HCT116 (cell line): ENCODE measurements at regions of chr1 and their contacts with region 1.

Region 1: GRCh38 chr1:23098463-23099170 is 70.0 kb downstream of the LUZP1 start:
- DNase-seq: peak; percentile 65
- ATAC-seq: peak; percentile 69
- H3K4me3 ChIP-seq: no peak overlapping the region
- H3K27ac ChIP-seq: no peak overlapping the region
- H3K4me1 ChIP-seq: peaks cover 32 to 54% of the 10 kb centered on the region in 2 experiments
- H3K27me3 ChIP-seq: no peaks in the 10 kb centered on the region
- CTCF ChIP-seq: peak; percentile 86 to 93 (median 93)
- POLR2A ChIP-seq: no peak
- RAD21 ChIP-seq: peak; percentile 97

Region 2: GRCh38 chr1:22451702-22452474 is 646.7 kb before region 1 on chr1 and contains the start of gene ZBTB40:
- CTCF ChIA-PET with region 1: no interaction called
- POLR2A ChIA-PET with region 1: no interaction called
- RAD21 ChIA-PET with region 1: no interaction called
- intact Hi-C with region 1: no loop called
- DNase-seq: peak; percentile 88
- ATAC-seq: peak; percentile 95
- H3K4me3 ChIP-seq: peak within 1 kb of the TSS; percentile 79 to 85
- H3K27ac ChIP-seq: peak within 1 kb of the TSS; percentile 67
- H3K4me1 ChIP-seq: peaks cover 13 to 25% of the 10 kb centered on the region in 2 experiments
- H3K27me3 ChIP-seq: no peaks in the 10 kb centered on the region
- CTCF ChIP-seq: no peak
- POLR2A ChIP-seq: peak; percentile 39
- RAD21 ChIP-seq: no peak
- total RNA-seq, gene ZBTB40: 19.5 TPM

Region 3: GRCh38 chr1:22976461-22977243 is 122.0 kb before region 1 on chr1:
- CTCF ChIA-PET with region 1: interaction called, 4 read pairs
- POLR2A ChIA-PET with region 1: no interaction called
- RAD21 ChIA-PET with region 1: no interaction called
- intact Hi-C with region 1: loop called (anchors 1 kb)
- DNase-seq: peak; percentile 78
- ATAC-seq: peak; percentile 98
- H3K4me3 ChIP-seq: 0 out of 4 replicates have a peak overlapping the region, but pooled peaks of 1 of the 2 experiments have one; percentile 2
- H3K27ac ChIP-seq: no peak overlapping the region
- H3K4me1 ChIP-seq: peaks cover 4 to 22% of the 10 kb centered on the region in 2 experiments; a peak in 2 of 4 replicates
- H3K27me3 ChIP-seq: no peaks in the 10 kb centered on the region
- CTCF ChIP-seq: peak; percentile 90 to 98 (median 95)
- POLR2A ChIP-seq: no peak
- RAD21 ChIP-seq: peak; percentile 96

Region 4: DNA sequence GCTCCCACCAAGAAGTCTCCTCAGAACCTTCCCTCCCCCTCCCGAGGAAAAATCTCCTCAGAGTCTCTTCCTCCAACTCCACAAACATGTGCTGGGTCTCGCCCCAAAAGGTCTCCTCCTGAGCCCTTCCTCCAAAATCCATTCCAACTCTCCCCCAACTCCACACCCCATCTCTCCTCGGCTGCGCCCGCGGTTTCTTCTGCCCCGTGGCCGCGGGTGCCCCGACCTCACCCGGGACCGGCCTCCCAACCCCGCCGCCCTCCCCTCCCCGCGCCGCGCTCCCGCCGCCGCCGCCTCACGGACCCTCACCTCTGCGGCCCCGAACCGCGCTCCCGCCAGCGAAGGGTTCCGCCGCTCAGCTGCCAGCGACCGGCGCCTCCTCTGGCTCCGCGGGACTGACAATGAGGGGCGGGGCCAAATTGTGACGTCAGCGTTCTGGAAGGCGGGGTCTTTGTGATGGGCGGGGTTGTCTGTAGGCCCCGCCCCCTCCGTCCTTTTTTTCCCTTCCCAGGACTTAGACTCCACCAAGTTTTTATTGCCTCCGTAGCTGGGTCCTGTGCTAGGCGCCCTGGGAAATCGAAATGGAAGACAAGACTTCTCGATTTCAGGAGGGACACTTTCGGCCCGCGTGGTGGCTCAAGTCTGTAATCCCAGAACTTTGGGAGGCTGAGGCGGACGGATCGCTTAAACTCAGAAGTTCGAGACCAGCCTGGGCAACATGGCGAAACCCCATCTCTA is 70.0 kb after region 1 on chr1 and contains the start of gene LUZP1:
- CTCF ChIA-PET with region 1: interaction called, 9 read pairs
- POLR2A ChIA-PET with region 1: interaction called, 19 read pairs
- RAD21 ChIA-PET with region 1: interaction called in 1 of 2 experiments, 3 read pairs
- intact Hi-C with region 1: loop called (anchors 5 kb)
- DNase-seq: peak; percentile 70
- ATAC-seq: peak; percentile 72
- H3K4me3 ChIP-seq: peak within 1 kb of the TSS; percentile 86 to 89
- H3K27ac ChIP-seq: peak within 1 kb of the TSS; percentile 75
- H3K4me1 ChIP-seq: peaks cover 8 to 26% of the 10 kb centered on the region in 2 experiments
- H3K27me3 ChIP-seq: no peaks in the 10 kb centered on the region
- CTCF ChIP-seq: no peak
- POLR2A ChIP-seq: peak; percentile 76
- RAD21 ChIP-seq: no peak
- total RNA-seq, gene LUZP1: 22.4 TPM

Region 5: DNA sequence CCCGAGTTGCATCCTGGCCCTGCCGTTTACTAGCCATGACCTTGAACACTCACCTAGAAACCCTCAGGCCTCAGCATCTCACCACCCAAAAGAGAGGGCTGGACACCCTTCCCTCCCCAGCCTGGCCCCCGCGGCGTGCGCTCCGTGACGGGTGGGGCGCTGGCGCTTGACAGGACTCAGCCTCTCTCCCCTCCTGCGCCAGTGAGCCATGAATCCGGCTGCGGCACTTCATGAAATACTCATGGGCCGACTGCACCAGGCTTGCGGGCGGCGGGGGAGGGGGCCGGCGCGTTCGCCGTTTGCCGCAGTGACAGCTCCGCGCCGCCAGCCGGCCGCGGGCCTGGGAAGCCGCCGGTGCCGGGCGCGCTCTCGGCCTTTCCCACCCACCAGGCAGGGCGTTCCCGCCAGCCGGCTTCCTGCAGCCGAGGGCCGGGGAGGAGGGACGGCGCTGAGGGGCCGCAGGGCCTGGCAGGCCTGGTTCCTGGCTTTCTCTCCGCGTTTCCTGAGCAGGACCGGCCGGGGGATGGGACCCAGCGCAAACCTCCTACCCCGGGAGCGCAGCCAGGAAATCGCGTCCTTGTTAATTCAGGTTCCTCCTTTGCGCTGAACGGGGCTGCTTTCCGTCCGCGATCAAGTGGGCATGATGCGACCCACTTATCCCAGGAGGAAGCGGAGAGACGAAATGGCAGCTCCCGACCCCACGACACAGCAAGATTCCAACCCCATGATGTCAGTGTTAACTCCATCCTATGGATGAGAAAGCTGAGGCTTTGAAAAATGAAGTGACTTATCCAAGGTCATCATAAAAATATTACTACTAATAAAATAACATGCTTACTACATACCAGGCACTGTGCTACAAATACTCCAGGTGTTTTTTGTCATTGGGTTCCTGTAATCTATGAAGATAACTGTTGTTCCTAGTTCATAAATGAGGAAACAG is 79.1 kb after region 1 on chr1:
- CTCF ChIA-PET with region 1: interaction called, 158 read pairs
- POLR2A ChIA-PET with region 1: interaction called, 3 read pairs
- RAD21 ChIA-PET with region 1: interaction called, 3 to 5 read pairs
- intact Hi-C with region 1: no loop called
- DNase-seq: no peak
- ATAC-seq: peak; percentile 81
- H3K4me3 ChIP-seq: peak overlapping the region; percentile 49 to 63
- H3K27ac ChIP-seq: no peak overlapping the region
- H3K4me1 ChIP-seq: peaks cover 2 to 29% of the 10 kb centered on the region in 2 experiments; a peak in 3 of 4 replicates
- H3K27me3 ChIP-seq: no peaks in the 10 kb centered on the region
- CTCF ChIP-seq: peak in 1 of 3 experiments; percentile 18; a peak in 1 of 6 replicates
- POLR2A ChIP-seq: no peak
- RAD21 ChIP-seq: no peak

Region 6: DNA sequence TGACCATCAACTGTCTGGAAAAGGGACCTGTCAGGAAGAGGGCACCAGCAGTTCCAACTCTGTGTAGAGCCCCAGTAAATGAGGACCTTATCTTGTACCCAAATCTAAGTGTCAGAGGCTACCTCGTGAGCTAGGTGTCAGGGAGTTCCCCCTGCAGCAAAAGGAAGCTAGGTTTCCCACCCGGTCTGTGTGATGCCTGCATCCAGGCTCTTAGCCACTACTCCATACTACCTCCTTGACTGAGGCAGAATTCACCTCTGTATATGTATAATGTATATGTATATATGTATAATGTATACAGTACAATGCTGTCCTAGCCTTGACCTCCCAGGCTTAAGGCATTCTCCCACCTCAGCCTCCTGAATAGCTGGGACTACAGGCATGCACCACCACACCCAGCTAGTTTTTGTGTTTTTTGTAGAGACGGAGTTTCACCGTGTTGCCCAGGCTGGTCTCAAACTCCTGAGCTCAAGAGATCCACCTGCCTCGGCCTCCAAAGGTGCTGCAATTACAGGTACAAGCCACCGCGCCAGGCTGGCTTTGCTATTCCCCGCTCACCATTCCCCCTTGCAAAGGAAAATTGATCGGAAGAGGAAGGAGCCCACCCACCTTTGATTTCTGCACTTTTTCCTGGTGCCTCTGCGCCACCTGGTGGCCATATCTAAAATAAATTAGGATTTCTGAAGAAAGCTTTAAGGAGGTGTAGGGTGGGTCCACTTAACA is 85.8 kb after region 1 on chr1:
- CTCF ChIA-PET with region 1: interaction called, 158 read pairs
- POLR2A ChIA-PET with region 1: interaction called, 9 read pairs
- RAD21 ChIA-PET with region 1: interaction called, 18 to 26 read pairs
- intact Hi-C with region 1: loop called (anchors 1 kb)
- DNase-seq: no peak
- ATAC-seq: peak; percentile 59
- H3K4me3 ChIP-seq: no peak overlapping the region
- H3K27ac ChIP-seq: no peak overlapping the region
- H3K4me1 ChIP-seq: peaks cover 17 to 26% of the 10 kb centered on the region in 2 experiments
- H3K27me3 ChIP-seq: no peaks in the 10 kb centered on the region
- CTCF ChIP-seq: peak; percentile 59 to 95 (median 76)
- POLR2A ChIP-seq: no peak
- RAD21 ChIP-seq: peak; percentile 96

Region 7: DNA sequence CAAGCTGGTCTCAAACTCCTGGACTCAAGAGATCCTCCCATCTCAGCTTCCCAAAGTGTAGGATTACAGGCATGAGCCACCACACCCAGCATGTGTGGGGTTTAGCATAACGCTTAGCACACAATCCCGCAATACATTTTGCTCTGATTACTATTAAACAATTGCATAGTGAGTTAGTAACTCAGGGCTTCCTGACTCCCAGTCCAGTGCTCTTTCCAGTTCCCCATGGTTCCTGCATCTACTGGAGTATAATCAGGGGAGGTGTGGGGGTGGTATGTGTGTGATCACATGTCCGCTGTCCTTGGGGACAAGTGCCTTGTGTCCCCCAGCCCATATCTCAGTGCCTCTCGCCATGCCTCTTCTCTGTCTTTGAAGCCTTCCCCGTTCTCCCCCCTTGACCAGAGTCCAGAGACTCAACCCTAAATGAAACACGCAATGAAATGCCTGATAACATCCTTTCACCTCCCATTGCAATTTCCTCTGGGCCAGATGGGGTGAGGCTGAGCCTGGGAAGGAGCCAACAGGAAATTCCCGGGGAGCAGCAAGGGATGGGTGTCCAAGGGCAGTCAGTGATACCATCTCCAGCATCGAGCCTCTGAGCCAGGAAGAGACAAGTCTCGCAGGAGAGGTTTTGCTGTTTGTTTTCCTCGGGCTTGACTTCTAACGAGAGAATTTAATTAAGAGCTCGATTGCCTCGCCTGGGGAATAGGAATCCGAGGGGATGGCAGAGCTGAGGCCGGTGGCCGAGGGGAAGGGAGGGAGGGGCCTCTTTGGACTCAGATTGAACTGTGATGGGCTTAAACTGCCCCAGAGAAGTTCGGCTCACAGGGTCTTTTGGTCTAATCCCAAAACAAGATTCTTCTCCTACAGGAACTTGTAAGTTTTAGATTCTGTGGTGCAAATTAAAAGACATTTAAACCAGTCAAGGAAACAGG is 126.4 kb after region 1 on chr1:
- CTCF ChIA-PET with region 1: no interaction called
- POLR2A ChIA-PET with region 1: no interaction called
- RAD21 ChIA-PET with region 1: no interaction called
- intact Hi-C with region 1: no loop called
- DNase-seq: no peak
- ATAC-seq: no peak
- H3K4me3 ChIP-seq: no peak overlapping the region
- H3K27ac ChIP-seq: no peak overlapping the region
- H3K4me1 ChIP-seq: no peaks in the 10 kb centered on the region
- H3K27me3 ChIP-seq: no peaks in the 10 kb centered on the region; the same call in 1 of the 2 replicates
- CTCF ChIP-seq: no peak
- POLR2A ChIP-seq: no peak
- RAD21 ChIP-seq: no peak

Region 8: DNA sequence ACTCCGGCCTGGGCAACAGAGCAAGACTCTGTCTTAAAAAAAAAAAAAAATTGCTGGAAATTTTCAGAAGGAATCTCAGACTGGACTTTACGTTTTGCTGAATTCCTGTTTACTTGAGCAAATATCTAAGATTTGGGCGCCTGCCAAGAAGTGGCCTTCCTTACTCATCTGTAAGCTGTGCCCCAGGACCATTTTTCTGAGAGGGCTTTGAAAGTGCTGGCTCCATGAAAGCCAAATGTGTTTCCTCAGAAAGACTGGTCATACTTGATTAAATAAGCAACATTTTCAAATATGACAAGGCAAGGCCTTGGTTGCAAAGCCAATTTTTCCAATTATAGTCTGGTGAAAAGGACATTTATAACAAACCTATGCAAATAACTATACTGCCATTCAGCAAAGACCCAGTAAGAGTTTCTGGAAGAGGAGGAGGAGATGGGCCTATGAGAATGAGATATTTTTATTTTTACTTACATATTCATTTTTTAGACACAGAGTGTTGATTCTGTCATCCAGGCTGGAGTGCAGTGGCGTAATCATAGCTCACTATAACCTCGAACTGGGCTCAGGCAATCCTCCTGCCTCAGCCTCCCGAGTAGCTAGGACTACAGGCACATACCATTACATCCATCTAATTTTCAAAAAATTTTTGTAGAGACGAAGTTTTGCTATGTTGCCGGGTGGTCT is 175.0 kb after region 1 on chr1:
- CTCF ChIA-PET with region 1: no interaction called
- POLR2A ChIA-PET with region 1: no interaction called
- RAD21 ChIA-PET with region 1: no interaction called
- intact Hi-C with region 1: loop called (anchors 10 kb)
- DNase-seq: peak; percentile 6
- ATAC-seq: no peak
- H3K4me3 ChIP-seq: no peak overlapping the region
- H3K27ac ChIP-seq: no peak overlapping the region
- H3K4me1 ChIP-seq: peaks cover 29 to 41% of the 10 kb centered on the region in 2 experiments
- H3K27me3 ChIP-seq: no peaks in the 10 kb centered on the region
- CTCF ChIP-seq: no peak
- POLR2A ChIP-seq: no peak
- RAD21 ChIP-seq: no peak